ENCODE measurements at regions of chr6 and their contacts with region 1.

Region 1: GRCh38 chr6:79078075-79079025 is at the start of gene PHIP:
- DNase-seq: peak; percentile 85 to 98 (median 90)

Region 2: DNA sequence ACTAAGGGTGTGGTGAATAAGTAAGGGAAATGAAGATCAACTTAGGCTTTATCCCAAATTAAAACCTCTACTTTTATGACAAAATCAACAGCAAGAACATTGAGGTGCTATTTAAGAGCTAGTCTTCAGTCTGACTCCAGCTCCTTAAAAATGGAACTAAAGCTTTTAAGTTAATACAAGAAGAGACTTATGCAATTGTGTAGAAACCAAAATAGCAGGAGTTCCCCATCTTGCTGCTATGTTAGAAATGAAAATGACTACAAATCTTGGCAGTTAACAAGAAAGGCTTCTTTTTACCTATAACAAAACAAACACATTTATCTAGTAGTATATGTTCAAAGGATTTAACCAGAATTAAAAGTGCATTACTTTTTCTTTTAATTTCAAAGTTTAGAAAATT is 130.5 kb after region 1 on chr6:
- intact Hi-C with region 1: no loop called
- DNase-seq: no peak

Region 3: GRCh38 chr6:79233611-79234149 is 155.3 kb after region 1 on chr6:
- intact Hi-C with region 1: loop called (anchors 1 kb)
- DNase-seq: peak; percentile 80 to 97 (median 86)

Region 4: GRCh38 chr6:79421707-79422484 is 343.5 kb after region 1 on chr6:
- intact Hi-C with region 1: loop called (anchors 2 kb)
- DNase-seq: no peak

Region 5: DNA sequence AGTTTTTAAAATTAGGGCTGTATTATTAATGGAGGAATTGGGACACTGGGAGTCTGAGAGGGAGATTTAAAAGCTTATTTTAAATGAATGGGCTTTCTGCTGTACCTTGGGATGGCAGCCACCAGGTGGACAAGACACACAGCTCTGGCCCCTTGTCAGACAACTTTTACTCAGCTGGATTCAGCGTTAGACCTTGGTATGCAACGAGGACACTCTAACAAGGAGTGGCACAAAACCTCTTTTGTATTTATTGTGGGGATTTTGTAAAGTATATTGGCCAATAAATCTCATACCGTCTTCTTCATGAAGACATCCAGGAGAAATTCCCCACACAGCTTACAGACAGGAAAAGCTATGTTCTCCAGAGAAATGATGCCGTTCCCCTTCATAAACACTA is 353.2 kb after region 1 on chr6:
- intact Hi-C with region 1: loop called (anchors 5 kb)
- DNase-seq: no peak

Region 6: DNA sequence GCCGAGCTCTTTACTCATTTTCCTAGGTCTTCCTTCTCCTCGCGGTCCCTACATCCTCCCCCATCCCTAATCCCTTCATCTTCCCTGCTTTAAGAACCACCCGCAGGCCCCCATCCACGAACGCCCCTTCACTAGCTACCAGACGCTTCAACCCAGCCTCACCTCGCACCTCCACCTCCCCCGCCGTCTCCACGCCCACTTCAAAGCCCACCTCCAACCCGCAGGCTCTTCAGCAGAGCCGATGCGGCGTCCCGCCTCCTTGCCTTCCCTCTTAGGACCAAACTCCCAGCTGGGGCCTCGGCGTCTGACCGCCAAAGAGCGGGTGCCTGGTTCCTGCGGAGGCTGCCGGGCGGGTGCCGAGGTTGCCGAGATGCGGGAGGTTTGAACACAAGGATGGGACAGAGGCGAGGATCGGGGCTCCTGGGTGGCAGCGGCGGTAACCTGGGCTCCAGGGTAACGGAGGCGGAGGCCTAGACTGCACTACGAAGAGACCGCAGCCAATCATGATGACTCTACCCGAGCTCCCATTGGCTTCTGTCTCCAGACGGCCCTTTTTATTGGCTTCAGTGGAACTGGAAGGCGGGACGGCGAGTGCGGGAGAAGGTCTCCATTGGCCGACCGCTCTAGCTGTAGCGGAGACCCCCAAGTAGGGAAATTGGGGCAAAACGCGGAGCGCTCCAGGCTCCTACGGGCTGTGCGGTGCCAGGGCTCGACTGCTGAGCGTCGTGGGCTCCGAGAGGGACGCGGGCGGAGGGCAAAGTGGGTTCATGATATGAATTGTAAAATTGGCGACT is 458.8 kb after region 1 on chr6 and contains the start of gene LCA5:
- intact Hi-C with region 1: loop called (anchors 5 kb)
- DNase-seq: peak; percentile 91 to 99 (median 95)